ENCODE measurements at regions of chr17 and their contacts with region 1.

Region 1: DNA sequence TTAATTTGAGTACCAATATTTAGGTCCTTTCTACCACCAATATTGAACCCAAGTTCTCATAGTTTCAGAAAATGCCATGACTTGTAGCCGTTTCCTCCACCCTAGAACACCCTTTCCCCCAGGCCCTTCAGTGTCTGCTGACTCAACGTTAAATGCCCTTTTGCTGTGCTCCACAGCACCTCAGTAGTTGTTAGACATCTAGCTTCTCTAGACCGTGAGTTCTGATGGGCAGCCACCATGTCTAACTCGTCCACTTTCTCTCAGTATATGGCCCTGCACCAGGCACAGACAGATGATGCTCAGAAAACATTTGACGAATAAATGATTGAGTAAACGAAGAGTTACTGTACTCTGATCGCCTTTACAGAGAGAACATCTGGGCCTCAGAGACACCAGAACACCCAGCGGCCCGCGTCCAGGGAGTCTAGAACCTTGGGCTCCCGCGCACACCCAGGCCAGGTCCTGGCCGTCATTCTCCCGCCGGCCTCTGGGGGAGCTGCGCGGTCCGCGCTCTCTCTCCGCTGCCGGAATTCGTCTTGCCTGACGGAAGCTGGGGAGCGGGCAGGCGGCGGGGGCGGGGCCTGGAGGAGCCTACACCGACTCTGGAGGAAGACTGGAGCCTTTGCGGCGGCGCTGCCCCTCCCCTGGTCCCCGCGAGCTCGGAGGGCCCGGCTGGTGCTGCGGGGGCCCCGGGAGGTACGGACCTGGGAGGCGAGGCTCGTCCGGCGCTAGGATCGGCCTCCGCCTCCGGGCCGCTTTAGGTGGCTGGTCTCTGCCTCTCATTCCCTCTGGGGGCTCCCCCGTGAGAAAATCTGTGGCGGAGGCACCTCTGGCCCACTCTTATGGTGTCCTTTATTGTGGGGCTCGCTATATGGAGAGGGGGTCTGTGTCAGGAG is at the start of gene NKIRAS2:
- DNase-seq: peak; percentile 95 to 98 (median 97)
- ATAC-seq: peak; percentile 68 to 81 (median 76)
- H3K4me3 ChIP-seq: peak within 1 kb of the TSS; percentile 51 to 98 (median 79)
- H3K27ac ChIP-seq: peak within 1 kb of the TSS; percentile 63 to 91 (median 86)
- H3K4me1 ChIP-seq: peaks cover 6 to 71% (median 45%) of the 10 kb centered on the region in 12 donors
- H3K27me3 ChIP-seq: no peaks in the 10 kb centered on the region
- CTCF ChIP-seq: peak; percentile 77 to 99 (median 96)
- POLR2A ChIP-seq: peak in 1 of 2 donors; percentile 62
- total RNA-seq, gene NKIRAS2: 50.6 to 78.9 (median 52.8) TPM

Region 2: GRCh38 chr17:41966463-41967140 is 53.2 kb before region 1 on chr17 and contains the start of gene CNP:
- intact Hi-C with region 1: loop called (anchors 2 to 5 kb)
- DNase-seq: peak; percentile 93 to 96 (median 94)
- ATAC-seq: peak; percentile 90 to 95 (median 94)
- H3K4me3 ChIP-seq: peak within 1 kb of the TSS; percentile 64 to 100 (median 90)
- H3K27ac ChIP-seq: peak within 1 kb of the TSS; percentile 59 to 94 (median 86)
- H3K4me1 ChIP-seq: peaks cover 0 to 42% (median 24%) of the 10 kb centered on the region in 12 donors
- H3K27me3 ChIP-seq: no peaks in the 10 kb centered on the region
- CTCF ChIP-seq: no peak
- POLR2A ChIP-seq: peak in 1 of 2 donors; percentile 91
- total RNA-seq, gene CNP: 23.3 to 49.1 (median 27.5) TPM

Region 3: DNA sequence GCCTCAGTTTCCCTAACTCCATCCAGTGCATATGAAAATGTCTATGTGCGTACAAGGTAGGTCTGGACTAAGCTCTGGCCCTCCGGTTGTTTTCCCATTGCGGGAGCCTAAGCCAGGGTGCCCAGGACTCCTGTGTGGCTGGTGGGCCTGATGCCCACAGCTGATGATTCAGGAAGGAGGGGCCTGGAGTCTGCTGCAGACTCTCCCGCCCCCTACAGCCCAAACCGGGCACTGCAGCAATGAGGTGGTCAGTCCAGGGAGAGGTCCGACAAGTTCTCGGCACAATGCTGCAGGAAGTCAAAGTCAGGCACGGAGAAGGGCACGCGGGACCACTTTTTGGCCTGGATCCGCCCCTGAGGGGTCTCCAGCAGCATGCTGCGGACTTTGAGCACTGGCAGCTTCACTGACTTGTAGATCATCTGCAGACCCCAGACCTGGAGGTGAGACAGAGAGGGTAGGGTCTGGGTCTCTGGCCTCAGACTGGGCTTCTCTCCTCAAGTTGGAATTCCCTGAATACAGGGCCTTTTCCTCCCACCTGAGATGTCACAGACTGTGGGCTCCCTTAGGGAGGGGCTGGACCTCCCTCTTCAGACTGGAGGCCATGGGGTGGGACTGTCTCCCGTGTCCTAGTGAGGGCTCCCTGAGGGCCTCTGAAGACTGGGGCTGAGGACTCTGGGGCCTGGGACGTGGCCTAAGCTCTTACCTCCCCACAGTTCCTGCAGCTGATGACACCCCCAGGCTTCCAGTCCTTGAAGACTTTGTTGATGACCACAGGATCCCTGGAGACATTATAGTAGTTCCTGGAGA is 82.0 kb after region 1 on chr17:
- intact Hi-C with region 1: loop called in 1 of 10 experiments (anchors 2 kb)
- DNase-seq: peak; percentile 63 to 87 (median 78)
- ATAC-seq: peak; percentile 85 to 89 (median 88)
- H3K4me3 ChIP-seq: no peak overlapping the region
- H3K27ac ChIP-seq: no peak overlapping the region
- H3K4me1 ChIP-seq: peaks cover 0 to 12% (median 4%) of the 10 kb centered on the region in 12 donors
- H3K27me3 ChIP-seq: peaks cover 9 to 20% (median 16%) of the 10 kb centered on the region in 9 donors
- CTCF ChIP-seq: peak; percentile 74 to 91 (median 84)
- POLR2A ChIP-seq: no peak

Region 4: DNA sequence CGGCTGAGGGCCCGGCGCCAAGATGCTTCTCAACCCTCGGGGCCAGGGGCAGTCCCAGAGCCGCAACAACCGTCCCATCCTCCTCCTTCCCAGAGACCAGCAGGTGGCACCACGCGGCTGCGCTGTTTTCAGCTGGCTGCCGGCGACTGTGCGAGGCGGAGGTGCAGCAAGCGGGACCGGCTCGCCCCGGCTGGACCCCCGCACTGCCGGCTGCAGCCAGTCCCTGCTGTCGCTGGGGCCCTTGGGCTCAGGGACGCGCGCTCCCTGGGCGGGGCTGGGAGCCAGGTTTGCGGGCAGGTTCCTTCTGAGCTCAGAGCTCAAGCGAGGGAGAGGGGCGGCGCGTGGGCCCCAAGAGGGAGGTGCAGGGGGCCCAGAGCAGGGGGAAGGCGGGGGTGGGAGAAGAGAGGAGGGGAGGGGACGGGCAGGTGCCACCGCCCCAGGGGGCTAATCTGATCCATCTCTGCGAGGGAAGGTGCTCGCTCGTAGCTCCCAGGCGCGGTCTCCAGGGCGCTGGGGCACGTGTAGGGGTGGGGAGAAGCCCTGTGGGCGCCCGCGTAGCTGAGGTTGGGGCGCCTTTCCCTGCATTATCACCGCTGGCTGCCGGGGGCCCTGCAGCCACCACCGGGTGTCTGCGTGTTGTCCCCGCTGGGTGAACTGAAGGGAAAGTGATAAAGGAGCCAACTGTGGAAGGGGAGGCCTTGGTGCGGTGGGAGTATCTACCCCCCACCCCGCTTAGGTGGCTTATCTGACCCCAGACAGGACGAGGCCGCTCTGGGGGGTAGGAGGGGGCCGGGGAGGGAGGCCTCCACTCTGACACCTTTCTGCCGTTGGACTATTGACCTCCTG is 292.8 kb after region 1 on chr17:
- intact Hi-C with region 1: loop called in 1 of 10 experiments (anchors 10 kb)
- DNase-seq: peak; percentile 87 to 92 (median 91)
- ATAC-seq: peak; percentile 75 to 85 (median 82)
- H3K4me3 ChIP-seq: peak overlapping the region in 9 of 12 donors; percentile 1 to 44 (median 24)
- H3K27ac ChIP-seq: peak overlapping the region; percentile 55 to 92 (median 76)
- H3K4me1 ChIP-seq: peaks cover 4 to 47% (median 27%) of the 10 kb centered on the region in 12 donors
- H3K27me3 ChIP-seq: no peaks in the 10 kb centered on the region
- CTCF ChIP-seq: peak; percentile 38 to 77 (median 66)
- POLR2A ChIP-seq: no peak

Region 5: GRCh38 chr17:42527273-42527703 is 507.5 kb after region 1 on chr17:
- intact Hi-C with region 1: loop called in 1 of 10 experiments (anchors 5 kb)
- DNase-seq: peak in 4 of 5 donors; percentile 73 to 75 (median 74)
- ATAC-seq: peak; percentile 51 to 84 (median 82)
- H3K4me3 ChIP-seq: no peak overlapping the region
- H3K27ac ChIP-seq: peak overlapping the region in 8 of 12 donors; percentile 54 to 97 (median 74)
- H3K4me1 ChIP-seq: peaks cover 0 to 51% (median 32%) of the 10 kb centered on the region in 12 donors
- H3K27me3 ChIP-seq: no peaks in the 10 kb centered on the region
- CTCF ChIP-seq: peak; percentile 72 to 87 (median 81)
- POLR2A ChIP-seq: no peak

Measured in heart left ventricle (tissue), 16 donors.